ENCODE measurements at regions of chr6 and their contacts with region 1.

Region 1: DNA sequence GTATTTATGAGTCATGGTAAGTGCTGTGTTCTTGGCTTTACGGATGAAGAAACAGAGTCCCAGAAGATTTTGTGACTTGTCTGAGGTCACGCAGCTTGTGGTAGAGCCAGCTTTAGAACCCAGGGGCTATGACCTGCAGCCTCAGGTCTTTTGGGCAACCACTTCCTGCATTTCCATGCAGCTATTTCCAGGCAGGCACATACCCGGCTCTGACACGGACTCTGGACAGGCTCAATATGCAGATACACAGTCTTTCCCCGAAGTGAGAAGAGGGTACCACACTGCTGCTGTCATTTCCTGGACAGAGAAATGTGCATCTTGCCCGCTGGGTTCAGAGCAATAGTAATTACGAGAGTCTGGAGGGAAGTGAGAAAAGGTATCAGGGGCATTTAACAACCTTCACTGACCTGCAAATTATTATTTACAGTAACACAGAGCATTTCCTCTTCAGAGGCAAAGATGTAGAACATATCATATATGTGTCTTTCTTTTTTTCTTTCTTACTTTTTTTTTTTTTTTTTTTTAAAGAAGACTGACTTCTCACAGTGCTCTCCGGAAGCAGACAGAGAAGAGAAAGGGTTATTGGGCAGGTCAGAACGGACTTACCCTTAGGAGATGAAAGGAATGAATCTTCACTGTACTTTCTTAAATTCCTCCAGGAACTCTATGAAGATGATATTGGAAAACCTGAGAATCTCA is 185.1 kb downstream of the CLIC5 start:
- DNase-seq: peak; percentile 50
- ATAC-seq: peak; percentile 86
- H3K4me3 Mint-ChIP-seq: peak overlapping the region; percentile 77
- H3K27ac Mint-ChIP-seq: peak overlapping the region; percentile 75
- H3K4me1 Mint-ChIP-seq: peaks cover 34% of the 10 kb centered on the region
- H3K27me3 Mint-ChIP-seq: peaks cover 7% of the 10 kb centered on the region
- CTCF ChIP-seq: no peak

Region 2: DNA sequence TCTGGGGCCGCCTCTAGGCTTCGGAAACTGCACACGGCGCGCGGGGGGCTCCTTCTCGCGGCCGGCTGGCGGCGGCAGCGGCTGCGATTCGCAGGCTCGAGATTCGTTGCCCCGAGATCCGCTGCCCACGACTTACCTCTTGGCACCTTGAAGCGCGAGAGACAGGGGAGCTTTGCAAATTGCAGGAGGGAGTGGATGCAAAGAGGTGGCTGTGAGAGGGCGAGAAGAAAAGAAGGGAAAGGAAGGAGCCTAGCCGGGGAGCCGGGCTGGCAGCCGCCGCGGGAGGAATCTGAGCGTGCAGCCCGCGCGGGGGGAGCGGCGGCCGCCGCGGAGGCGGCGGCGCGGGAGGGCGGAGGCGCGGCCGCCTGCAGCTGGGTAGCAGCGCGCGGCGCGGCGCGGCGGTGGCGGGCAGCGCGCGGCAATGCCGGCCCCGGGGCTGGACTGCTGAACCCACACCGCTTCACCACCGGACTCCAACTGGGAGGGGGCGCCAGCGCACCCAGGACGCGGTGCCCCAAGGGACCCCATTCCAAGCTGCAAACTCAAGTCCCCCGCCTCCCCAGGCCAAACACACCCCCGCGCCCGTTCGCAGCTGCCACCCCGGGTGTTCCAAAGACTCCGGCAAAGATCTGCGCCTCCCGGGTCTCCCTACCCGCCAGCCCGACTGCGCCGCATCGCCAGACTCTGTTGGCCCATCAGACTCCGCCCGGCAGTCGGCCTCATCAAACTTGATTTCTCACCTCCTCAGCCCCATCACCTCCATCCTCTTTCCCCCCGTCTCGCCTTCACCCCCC is 408.7 kb before region 1 on chr6:
- CTCF ChIA-PET with region 1: no interaction called
- POLR2A ChIA-PET with region 1: no interaction called
- intact Hi-C with region 1: loop called (anchors 1 kb)
- DNase-seq: peak; percentile 50
- ATAC-seq: peak; percentile 40
- H3K4me3 Mint-ChIP-seq: peak overlapping the region; percentile 90
- H3K27ac Mint-ChIP-seq: peak overlapping the region; percentile 76
- H3K4me1 Mint-ChIP-seq: peaks cover 54% of the 10 kb centered on the region
- H3K27me3 Mint-ChIP-seq: peaks cover 39% of the 10 kb centered on the region
- CTCF ChIP-seq: no peak

Region 3: DNA sequence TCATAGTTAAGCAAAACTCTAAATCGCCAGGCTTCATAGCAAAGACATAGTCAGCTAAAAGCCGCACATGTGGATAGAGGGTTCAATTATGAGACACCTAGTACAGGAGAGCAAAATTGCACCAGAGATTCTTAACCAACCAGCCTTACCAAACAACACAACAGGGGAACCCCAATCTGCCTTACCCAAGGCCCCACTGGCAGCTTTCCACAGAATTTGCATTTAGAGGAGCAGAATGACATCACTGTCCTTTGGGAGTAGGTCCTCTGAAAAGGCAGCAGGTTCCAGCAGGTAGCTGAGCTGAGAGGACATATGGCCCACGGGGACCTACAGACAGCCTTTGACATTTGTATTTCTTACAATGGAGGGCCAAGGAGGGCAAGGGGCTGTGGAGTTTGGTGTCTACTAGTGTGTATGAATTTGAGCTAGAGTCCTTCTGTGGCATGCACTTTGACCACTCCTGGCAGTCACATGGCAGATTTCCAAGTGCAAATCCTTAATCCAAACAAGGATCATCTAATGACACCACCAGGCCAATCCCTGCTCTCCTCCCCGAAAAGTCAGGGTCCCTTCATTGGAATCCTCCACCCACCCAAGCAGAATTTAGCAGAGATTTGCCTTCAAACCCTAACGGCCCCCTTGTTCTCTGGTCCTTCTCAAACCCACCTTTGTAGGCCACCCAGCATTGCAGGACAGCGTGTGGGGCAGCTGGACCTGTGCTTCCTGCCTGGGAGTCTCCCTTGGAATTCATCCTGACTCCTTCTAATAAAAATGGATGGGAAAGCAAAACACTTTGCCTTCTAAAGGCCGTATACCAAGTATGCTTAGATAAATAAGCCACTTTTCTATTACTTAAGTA is 281.7 kb before region 1 on chr6:
- CTCF ChIA-PET with region 1: no interaction called
- POLR2A ChIA-PET with region 1: no interaction called
- intact Hi-C with region 1: loop called (anchors 1 kb)
- DNase-seq: peak; percentile 20
- ATAC-seq: peak; percentile 97
- H3K4me3 Mint-ChIP-seq: peak overlapping the region; percentile 9
- H3K27ac Mint-ChIP-seq: no peak overlapping the region
- H3K4me1 Mint-ChIP-seq: peaks cover 15% of the 10 kb centered on the region
- H3K27me3 Mint-ChIP-seq: no peaks in the 10 kb centered on the region
- CTCF ChIP-seq: no peak

Region 4: GRCh38 chr6:45818655-45819054 is 11.9 kb before region 1 on chr6:
- CTCF ChIA-PET with region 1: no interaction called
- POLR2A ChIA-PET with region 1: interaction called, 3 read pairs
- intact Hi-C with region 1: loop called (anchors 1 kb)
- DNase-seq: no peak
- ATAC-seq: peak; percentile 25
- H3K4me3 Mint-ChIP-seq: no peak overlapping the region
- H3K27ac Mint-ChIP-seq: no peak overlapping the region
- H3K4me1 Mint-ChIP-seq: peaks cover 23% of the 10 kb centered on the region
- H3K27me3 Mint-ChIP-seq: no peaks in the 10 kb centered on the region
- CTCF ChIP-seq: no peak

Region 5: DNA sequence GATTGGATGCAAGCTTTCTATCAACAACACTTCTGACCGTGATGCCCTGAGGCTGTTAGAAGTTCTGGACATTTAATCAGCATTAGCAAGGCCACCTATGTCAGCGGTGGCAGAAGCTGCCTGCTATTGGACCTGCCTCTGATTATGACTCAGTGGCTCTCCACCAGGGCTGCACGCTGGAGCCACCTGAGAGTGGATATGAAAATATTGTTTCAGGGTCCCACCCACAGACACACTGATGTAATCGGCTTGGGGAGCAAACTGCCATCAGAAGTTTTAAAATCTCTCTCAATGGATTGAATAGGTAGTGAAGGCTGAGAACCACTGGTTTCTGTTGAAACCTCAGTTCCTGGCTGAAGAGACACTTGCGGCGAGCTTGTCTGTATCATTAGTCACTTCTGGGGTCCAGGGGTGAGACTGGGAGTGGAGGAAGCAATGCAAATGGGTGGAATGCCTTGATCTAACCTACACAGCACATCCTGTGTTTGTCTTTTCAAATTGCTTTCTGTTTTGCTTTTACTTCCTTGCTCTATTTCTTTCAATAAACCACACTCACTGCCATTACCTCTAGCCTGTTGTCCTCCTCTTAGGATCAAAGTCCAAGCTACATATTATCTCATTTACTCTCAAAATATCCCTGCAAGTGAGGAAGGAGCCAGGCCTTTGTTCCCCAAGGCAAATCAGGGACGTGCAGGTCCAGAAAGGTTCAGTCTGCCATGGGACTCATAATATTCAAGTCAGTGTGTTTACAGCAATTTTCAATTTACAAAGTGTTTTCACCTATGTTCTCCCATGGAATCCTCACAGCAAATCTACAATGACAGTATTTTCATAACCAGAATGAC is 180.9 kb after region 1 on chr6:
- CTCF ChIA-PET with region 1: no interaction called
- POLR2A ChIA-PET with region 1: no interaction called
- intact Hi-C with region 1: loop called (anchors 10 kb)
- DNase-seq: no peak
- ATAC-seq: peak; percentile 76
- H3K4me3 Mint-ChIP-seq: peak overlapping the region; percentile 64
- H3K27ac Mint-ChIP-seq: peak overlapping the region; percentile 82
- H3K4me1 Mint-ChIP-seq: peaks cover 44% of the 10 kb centered on the region
- H3K27me3 Mint-ChIP-seq: peaks cover 1% of the 10 kb centered on the region
- CTCF ChIP-seq: no peak

Region 6: GRCh38 chr6:46376562-46377061 is 546.0 kb after region 1 on chr6:
- CTCF ChIA-PET with region 1: no interaction called
- POLR2A ChIA-PET with region 1: no interaction called
- intact Hi-C with region 1: loop called (anchors 10 kb)
- DNase-seq: peak; percentile 17
- ATAC-seq: peak; percentile 89
- H3K4me3 Mint-ChIP-seq: peak overlapping the region; percentile 69
- H3K27ac Mint-ChIP-seq: peak overlapping the region; percentile 86
- H3K4me1 Mint-ChIP-seq: peaks cover 77% of the 10 kb centered on the region
- H3K27me3 Mint-ChIP-seq: no peaks in the 10 kb centered on the region
- CTCF ChIP-seq: no peak